Pancreas (tissue), 10 donors: ENCODE measurements at regions of chrX and their contacts with region 1.

Region 1: DNA sequence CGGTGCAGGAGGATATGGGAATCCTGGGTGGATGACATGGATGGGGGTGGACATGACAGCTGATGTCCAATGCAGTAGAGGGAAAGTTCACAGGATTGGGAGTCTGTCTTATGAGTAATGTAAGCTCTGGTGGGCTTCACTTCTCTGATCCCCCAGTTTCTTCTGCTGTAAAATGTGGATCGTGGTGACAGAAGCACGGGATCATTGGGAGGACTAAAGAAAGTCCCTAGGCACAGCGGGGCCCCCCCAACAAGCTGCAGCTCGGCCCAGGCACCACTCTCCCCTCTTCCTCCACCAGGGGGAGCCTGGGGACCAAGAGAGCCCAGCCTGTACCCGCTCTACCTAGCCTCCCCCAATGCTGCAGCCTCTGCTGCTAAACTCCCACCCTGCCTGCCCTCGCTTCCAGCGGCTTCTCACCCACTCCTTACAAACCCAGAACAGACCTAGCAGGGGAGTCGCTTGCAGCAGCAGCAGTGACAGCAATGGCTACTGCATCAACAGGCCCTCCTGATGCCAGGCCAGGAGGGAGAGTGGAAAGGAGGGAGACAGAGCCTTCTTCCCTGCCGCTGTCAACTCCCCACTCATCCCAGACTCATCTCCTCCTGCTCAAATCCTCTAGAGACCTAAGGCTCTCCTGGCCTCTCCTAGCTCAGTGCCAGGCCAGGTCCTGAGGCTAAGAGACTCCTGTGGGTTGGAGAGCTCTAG is 36.1 kb upstream of the IQSEC2 start:
- DNase-seq: peak; percentile 35 to 86 (median 71)
- ATAC-seq: peak; percentile 62 to 81 (median 78)
- H3K4me3 ChIP-seq: no peak overlapping the region
- H3K27ac ChIP-seq: no peak overlapping the region
- H3K4me1 ChIP-seq: no peaks in the 10 kb centered on the region
- H3K27me3 ChIP-seq: peaks cover 0 to 6% (median 0%) of the 10 kb centered on the region in 4 donors
- CTCF ChIP-seq: peak; percentile 78 to 92 (median 81)

Region 2: DNA sequence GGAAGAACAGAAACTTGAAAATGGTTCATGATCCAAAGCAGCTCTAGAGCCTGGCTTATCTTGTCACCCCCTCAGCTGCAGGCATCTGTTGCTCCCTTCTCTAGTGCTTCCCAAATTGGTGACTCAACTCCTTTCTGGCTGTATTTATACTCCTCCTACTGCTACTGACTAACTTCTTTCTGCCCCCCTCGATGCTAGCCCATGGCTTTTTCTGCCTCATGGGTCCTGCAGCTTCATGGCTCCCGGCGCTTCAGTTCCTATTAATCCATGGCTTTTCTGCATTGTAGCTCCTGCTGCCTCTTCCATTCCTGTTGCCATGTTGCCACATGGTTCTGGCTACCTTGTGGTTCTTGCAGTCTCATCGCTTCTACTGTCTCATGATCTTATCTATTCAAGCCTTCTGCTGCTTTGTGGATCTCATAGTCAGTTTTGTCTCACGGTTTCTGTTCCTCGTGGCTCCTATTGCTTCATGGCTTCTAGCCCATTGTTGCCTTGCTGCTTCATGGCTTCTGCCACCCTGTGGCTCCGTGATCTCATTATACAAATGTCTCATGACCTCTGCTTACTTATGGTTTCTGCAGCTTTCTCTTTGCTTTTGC is 56.8 kb after region 1 on chrX:
- intact Hi-C with region 1: no loop called
- DNase-seq: no peak
- ATAC-seq: peak in 1 of 4 donors; percentile 38
- H3K4me3 ChIP-seq: no peak overlapping the region
- H3K27ac ChIP-seq: no peak overlapping the region
- H3K4me1 ChIP-seq: no peaks in the 10 kb centered on the region
- H3K27me3 ChIP-seq: no peaks in the 10 kb centered on the region
- CTCF ChIP-seq: no peak

Region 3: DNA sequence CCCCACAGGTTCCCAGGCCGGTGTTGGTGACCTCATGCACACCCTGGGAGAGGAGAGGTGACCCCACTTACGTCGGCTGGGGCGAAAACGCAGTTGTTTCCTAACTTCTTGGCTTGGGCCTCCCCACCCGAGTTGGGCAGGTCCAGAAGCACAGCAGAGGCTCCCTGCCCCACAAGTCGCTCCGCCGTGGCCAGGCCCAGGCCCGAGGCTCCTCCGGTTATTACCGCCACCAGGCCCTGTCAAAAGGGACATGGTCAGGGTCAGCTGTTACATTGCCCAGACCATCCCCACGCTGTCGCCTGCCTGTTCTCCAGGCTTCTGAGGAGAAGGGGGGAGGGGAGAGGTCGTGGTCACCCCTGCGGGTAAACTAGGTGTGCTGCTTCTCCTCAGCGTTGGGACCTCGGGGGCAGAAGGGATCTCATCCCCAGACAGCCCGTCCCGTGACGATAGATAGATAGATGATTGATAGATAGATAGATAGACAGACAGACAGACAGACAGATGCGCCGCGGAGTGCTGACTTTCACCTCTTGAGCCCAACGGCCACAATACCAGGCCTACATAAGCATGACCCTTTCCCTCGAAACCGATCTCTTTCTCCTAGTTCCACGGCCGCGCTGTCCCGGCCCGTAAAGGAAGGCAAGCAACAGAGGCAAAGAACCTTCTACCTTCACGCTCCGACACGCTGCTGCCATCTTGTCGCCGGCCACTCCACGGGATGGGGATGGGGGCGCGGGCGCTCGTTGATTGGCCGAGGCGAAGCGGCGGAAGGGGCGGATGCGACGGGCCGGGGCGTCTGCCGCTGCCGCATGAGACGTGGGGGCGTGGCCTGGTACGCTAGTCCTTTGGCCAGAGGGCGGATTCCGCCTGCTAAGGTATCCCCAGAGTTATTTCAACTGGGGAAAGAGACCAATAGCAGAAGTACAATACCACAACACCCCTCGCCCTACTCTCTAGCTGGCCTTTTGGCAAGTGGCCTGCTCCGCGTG is 116.4 kb after region 1 on chrX and contains the start of gene HSD17B10:
- intact Hi-C with region 1: loop called in 2 of 3 experiments (anchors 5 to 10 kb)
- DNase-seq: peak; percentile 85 to 94 (median 88)
- ATAC-seq: peak; percentile 97 to 98 (median 98)
- H3K4me3 ChIP-seq: peak within 1 kb of the TSS; percentile 16 to 57 (median 38)
- H3K27ac ChIP-seq: peak within 1 kb of the TSS in 2 of 4 donors; percentile 14 to 42
- H3K4me1 ChIP-seq: peaks cover 0 to 5% (median 0%) of the 10 kb centered on the region in 3 donors
- H3K27me3 ChIP-seq: peaks cover 0 to 9% (median 0%) of the 10 kb centered on the region in 4 donors
- CTCF ChIP-seq: no peak
- total RNA-seq, gene HSD17B10: 26.8 to 54.1 (median 40.2) TPM